ENCODE measurements at regions of chr17 and their contacts with region 1.

Region 1: GRCh38 chr17:43367737-43368242 is 31.0 kb upstream of the ARL4D start:
- DNase-seq: peak; percentile 62
- ATAC-seq: peak; percentile 53
- H3K4me3 Mint-ChIP-seq: peak overlapping the region; percentile 85
- H3K27ac Mint-ChIP-seq: peak overlapping the region; percentile 100
- H3K4me1 Mint-ChIP-seq: peaks cover 57% of the 10 kb centered on the region
- H3K27me3 Mint-ChIP-seq: no peaks in the 10 kb centered on the region

Region 2: GRCh38 chr17:42809250-42809649 is 558.5 kb before region 1 on chr17:
- CTCF ChIA-PET with region 1: no interaction called
- POLR2A ChIA-PET with region 1: no interaction called
- intact Hi-C with region 1: no loop called
- DNase-seq: no peak
- ATAC-seq: no peak
- H3K4me3 Mint-ChIP-seq: no peak overlapping the region
- H3K27ac Mint-ChIP-seq: no peak overlapping the region
- H3K4me1 Mint-ChIP-seq: no peaks in the 10 kb centered on the region
- H3K27me3 Mint-ChIP-seq: no peaks in the 10 kb centered on the region

Region 3: DNA sequence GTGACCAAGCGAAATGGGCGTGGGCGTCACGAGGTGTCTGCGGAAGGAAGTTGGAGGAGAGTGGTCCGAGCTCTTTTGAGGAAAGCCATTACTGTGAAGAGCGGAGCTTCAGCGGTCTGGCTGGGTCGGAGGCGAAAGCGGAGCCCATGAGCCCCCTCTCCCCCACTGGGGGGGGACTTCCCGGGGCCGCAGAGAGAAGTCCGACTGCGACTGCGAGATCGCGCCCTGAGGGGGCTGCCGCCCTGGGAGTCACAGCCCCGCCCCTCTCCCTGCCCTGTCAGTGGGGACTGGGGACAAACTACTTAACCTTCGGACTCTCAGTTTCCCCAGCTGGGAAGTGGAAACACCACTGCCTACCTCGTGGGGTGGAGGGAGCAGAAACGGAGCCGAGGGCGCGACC is 11.0 kb after region 1 on chr17:
- CTCF ChIA-PET with region 1: no interaction called
- POLR2A ChIA-PET with region 1: interaction called, 12 read pairs
- intact Hi-C with region 1: no loop called
- DNase-seq: no peak
- ATAC-seq: no peak
- H3K4me3 Mint-ChIP-seq: no peak overlapping the region
- H3K27ac Mint-ChIP-seq: no peak overlapping the region
- H3K4me1 Mint-ChIP-seq: no peaks in the 10 kb centered on the region
- H3K27me3 Mint-ChIP-seq: no peaks in the 10 kb centered on the region

Region 4: DNA sequence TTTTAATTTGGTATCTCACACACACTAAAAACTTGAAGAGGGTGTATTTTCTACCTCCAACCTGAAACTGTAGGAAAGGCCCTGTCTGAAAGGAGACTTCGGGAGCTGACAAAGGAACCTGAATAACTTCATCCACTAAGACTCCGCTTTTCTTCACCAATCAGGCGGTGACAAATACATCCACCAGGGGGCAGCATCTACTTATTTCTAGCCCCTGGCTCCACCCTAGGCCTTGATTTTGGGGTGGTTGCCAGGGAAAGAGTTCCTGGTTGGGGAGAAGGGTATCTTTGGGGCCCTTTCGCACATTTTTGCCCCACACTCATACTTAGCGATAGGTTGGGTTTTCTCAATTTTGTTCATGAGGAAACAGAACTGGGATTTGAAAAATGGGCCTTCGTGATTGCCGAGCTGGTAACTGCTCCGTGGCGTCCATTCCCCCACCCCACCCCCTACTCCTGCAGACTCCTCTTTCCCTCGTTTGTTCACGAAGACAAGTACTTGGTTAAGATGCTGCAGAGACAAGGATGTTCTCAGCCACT is 26.2 kb after region 1 on chr17:
- CTCF ChIA-PET with region 1: interaction called, 8 read pairs
- POLR2A ChIA-PET with region 1: interaction called, 148 read pairs
- intact Hi-C with region 1: loop called in 1 of 2 experiments (anchors 1 kb)
- DNase-seq: peak; percentile 93
- ATAC-seq: peak; percentile 55
- H3K4me3 Mint-ChIP-seq: no peak overlapping the region
- H3K27ac Mint-ChIP-seq: peak overlapping the region; percentile 31
- H3K4me1 Mint-ChIP-seq: peaks cover 20% of the 10 kb centered on the region
- H3K27me3 Mint-ChIP-seq: no peaks in the 10 kb centered on the region

Region 5: DNA sequence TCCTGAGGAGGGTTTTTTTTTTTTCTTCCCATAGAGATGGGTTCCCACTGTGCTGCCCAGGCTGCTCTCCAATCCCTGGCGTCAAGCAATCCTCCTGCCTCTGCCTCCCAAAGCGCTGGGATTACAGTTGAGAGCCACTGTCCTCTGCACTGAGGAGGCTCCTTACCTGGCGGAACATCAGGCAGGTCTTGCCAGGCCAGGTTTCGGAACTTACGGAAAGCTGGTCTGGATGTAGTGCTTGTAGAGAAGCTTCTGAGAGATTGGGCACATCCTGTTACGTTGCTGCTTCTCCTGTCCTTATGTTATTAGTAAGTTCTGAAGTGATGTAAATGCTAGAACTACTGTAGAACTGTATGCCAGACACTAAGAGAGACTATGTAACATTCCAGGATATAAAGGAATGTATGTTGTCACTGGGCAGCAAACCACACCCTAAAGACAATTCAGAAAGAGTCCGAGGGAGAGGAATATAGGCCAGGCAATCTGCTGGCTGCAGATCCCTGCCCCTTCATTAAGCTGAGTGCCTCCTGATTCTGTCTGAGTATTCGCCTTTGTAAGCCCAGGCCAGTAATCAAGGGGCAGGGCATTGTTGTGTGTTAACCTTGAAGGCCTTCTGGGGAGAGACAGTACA is 157.3 kb after region 1 on chr17:
- CTCF ChIA-PET with region 1: no interaction called
- POLR2A ChIA-PET with region 1: no interaction called
- intact Hi-C with region 1: no loop called
- DNase-seq: no peak
- ATAC-seq: no peak
- H3K4me3 Mint-ChIP-seq: no peak overlapping the region
- H3K27ac Mint-ChIP-seq: no peak overlapping the region
- H3K4me1 Mint-ChIP-seq: no peaks in the 10 kb centered on the region
- H3K27me3 Mint-ChIP-seq: no peaks in the 10 kb centered on the region

Region 6: GRCh38 chr17:43946069-43946696 is 578.4 kb after region 1 on chr17:
- CTCF ChIA-PET with region 1: no interaction called
- POLR2A ChIA-PET with region 1: no interaction called
- intact Hi-C with region 1: no loop called
- DNase-seq: peak; percentile 33
- ATAC-seq: no peak
- H3K4me3 Mint-ChIP-seq: no peak overlapping the region
- H3K27ac Mint-ChIP-seq: no peak overlapping the region
- H3K4me1 Mint-ChIP-seq: peaks cover 6% of the 10 kb centered on the region
- H3K27me3 Mint-ChIP-seq: peaks cover 13% of the 10 kb centered on the region

Measured in activated CD4-positive, alpha-beta T cell treated with anti-CD3 and anti-CD28 coated beads for 36 hours (primary cell).